Heart left ventricle (tissue), 16 donors: ENCODE measurements at regions of chr21 and their contacts with region 1.

Region 1: GRCh38 chr21:35940074-35940927 is 120.0 kb downstream of the SETD4 start:
- DNase-seq: peak in 4 of 5 donors; percentile 29 to 48 (median 43)
- ATAC-seq: peak; percentile 82 to 99 (median 96)
- H3K4me3 ChIP-seq: peak overlapping the region in 1 of 12 donors; percentile 22
- H3K27ac ChIP-seq: peak overlapping the region in 1 of 12 donors; percentile 5
- H3K4me1 ChIP-seq: peaks cover 0 to 12% (median 1%) of the 10 kb centered on the region in 12 donors
- H3K27me3 ChIP-seq: no peaks in the 10 kb centered on the region
- CTCF ChIP-seq: peak; percentile 50 to 78 (median 64)
- POLR2A ChIP-seq: no peak

Region 2: DNA sequence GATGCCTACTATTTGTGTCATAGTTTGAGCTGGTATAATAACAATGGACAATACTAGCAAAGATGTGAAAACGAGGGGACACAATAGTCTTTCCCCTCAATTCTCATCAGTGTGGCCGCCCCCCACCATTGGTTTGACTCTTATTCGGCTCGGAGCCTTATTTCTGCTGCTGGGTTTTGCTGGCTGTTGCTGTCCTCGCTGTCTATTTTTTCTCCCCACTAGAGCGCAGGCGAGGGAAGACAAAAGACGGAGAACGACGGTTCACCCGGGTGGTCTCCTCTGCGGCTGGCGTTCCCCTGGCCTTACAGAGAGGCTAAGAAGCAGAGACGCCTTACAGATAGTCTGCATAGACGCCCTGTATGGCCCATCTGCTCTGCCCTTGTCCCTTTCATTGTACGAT is 1252.2 kb before region 1 on chr21:
- intact Hi-C with region 1: loop called in 2 of 10 experiments (anchors 5 kb)
- DNase-seq: peak in 1 of 5 donors; percentile 57
- ATAC-seq: no peak
- H3K4me3 ChIP-seq: no peak overlapping the region
- H3K27ac ChIP-seq: no peak overlapping the region
- H3K4me1 ChIP-seq: peaks cover 0 to 15% (median 0%) of the 10 kb centered on the region in 12 donors
- H3K27me3 ChIP-seq: no peaks in the 10 kb centered on the region
- CTCF ChIP-seq: peak in 5 of 12 donors; percentile 38 to 62 (median 54)
- POLR2A ChIP-seq: no peak

Region 3: GRCh38 chr21:35051287-35051818 is 888.9 kb before region 1 on chr21:
- intact Hi-C with region 1: loop called in 4 of 10 experiments (anchors 5 to 10 kb)
- DNase-seq: peak; percentile 82 to 91 (median 86)
- ATAC-seq: peak; percentile 86 to 94 (median 91)
- H3K4me3 ChIP-seq: no peak overlapping the region
- H3K27ac ChIP-seq: peak overlapping the region in 7 of 12 donors; percentile 13 to 76 (median 37)
- H3K4me1 ChIP-seq: peaks cover 0 to 47% (median 12%) of the 10 kb centered on the region in 12 donors
- H3K27me3 ChIP-seq: peaks cover 0 to under 1% (median 0%) of the 10 kb centered on the region in 9 donors
- CTCF ChIP-seq: peak in 11 of 12 donors; percentile 43 to 71 (median 60)
- POLR2A ChIP-seq: no peak

Region 4: GRCh38 chr21:35840197-35840799 is 100.0 kb before region 1 on chr21:
- intact Hi-C with region 1: loop called in 3 of 10 experiments (anchors 1 to 10 kb)
- DNase-seq: peak in 4 of 5 donors; percentile 48 to 64 (median 56)
- ATAC-seq: peak in 3 of 4 donors; percentile 51 to 62 (median 58)
- H3K4me3 ChIP-seq: no peak overlapping the region
- H3K27ac ChIP-seq: no peak overlapping the region
- H3K4me1 ChIP-seq: peaks cover 0 to 7% (median 0%) of the 10 kb centered on the region in 12 donors
- H3K27me3 ChIP-seq: no peaks in the 10 kb centered on the region
- CTCF ChIP-seq: peak; percentile 62 to 87 (median 82)
- POLR2A ChIP-seq: no peak

Region 5: GRCh38 chr21:36028127-36029069 is 88.1 kb after region 1 on chr21:
- intact Hi-C with region 1: loop called in 2 of 10 experiments (anchors 1 to 10 kb)
- DNase-seq: peak; percentile 58 to 78 (median 70)
- ATAC-seq: peak; percentile 75 to 90 (median 85)
- H3K4me3 ChIP-seq: no peak overlapping the region
- H3K27ac ChIP-seq: no peak overlapping the region
- H3K4me1 ChIP-seq: peaks cover 0 to 4% (median 0%) of the 10 kb centered on the region in 12 donors
- H3K27me3 ChIP-seq: no peaks in the 10 kb centered on the region
- CTCF ChIP-seq: peak; percentile 87 to 98 (median 94)
- POLR2A ChIP-seq: no peak